ENCODE measurements at regions of chr3 and their contacts with region 1.

Region 1: DNA sequence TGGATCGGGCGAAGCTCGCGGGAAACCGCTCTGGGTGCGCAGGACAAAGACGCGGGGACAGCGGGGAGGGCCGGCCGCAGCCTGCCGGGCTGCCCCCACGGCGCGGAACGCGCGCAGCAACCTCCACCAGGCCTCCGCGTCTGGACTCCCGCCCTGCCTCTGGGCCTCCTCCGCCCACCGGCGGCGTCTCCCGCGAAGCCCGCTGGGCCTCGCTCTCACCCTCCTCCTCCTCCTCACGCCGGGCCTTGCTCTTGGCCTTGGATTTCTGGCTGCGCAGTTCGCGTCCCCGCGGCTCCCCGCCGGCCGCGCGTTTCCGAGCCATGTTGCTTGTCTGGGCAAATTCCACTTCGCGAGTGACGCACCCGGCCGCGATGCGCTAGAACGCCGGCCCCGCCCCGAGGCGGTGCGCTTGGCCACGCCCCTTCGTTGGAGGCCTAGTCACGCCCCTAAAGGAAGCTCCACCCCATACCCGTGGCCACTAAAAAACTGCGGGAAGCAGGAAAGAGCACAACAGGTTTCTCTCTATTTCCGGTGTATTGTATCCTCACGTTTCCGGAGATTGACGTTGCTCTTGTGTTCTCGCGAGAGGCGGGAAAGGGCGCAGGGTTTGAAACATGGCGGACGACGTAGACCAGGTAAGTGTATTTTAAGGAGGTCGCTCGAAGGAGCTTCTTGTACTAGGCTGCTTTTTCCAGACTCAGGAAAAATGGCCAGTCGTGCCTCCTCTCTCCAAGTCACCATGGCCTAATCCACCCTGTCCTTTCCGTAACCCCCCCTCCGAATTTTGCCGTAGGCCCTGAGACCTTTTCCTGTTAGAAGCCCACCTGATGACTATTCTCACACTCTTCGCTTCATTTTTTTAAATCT is at the starts of genes LSM3 and XPC:
- DNase-seq: peak; percentile 99
- ATAC-seq: peak; percentile 88
- H3K4me3 Mint-ChIP-seq: peak within 1 kb of the TSS; percentile 94
- H3K27ac Mint-ChIP-seq: peak within 1 kb of the TSS; percentile 100
- H3K4me1 Mint-ChIP-seq: peaks cover 59% of the 10 kb centered on the region
- H3K27me3 Mint-ChIP-seq: no peaks in the 10 kb centered on the region
- total RNA-seq, gene LSM3: 14.3 to 14.4 TPM
- total RNA-seq, gene XPC: 53.3 to 56.8 TPM

Region 2: GRCh38 chr3:14124615-14125190 is 53.8 kb before region 1 on chr3 and contains the starts of genes CHCHD4 and TMEM43:
- POLR2A ChIA-PET with region 1: interaction called, 48 read pairs
- DNase-seq: peak; percentile 96
- ATAC-seq: peak; percentile 92
- H3K4me3 Mint-ChIP-seq: peak within 1 kb of the TSS; percentile 95
- H3K27ac Mint-ChIP-seq: peak within 1 kb of the TSS; percentile 92
- H3K4me1 Mint-ChIP-seq: peaks cover 52% of the 10 kb centered on the region
- H3K27me3 Mint-ChIP-seq: no peaks in the 10 kb centered on the region
- total RNA-seq, gene CHCHD4: 10.1 to 11.9 TPM
- total RNA-seq, gene TMEM43: 44.4 to 47.0 TPM

Region 3: GRCh38 chr3:14144423-14145075 is 33.9 kb before region 1 on chr3:
- POLR2A ChIA-PET with region 1: interaction called, 31 read pairs
- DNase-seq: peak; percentile 46
- ATAC-seq: peak; percentile 89
- H3K4me3 Mint-ChIP-seq: peak overlapping the region; percentile 61
- H3K27ac Mint-ChIP-seq: peak overlapping the region; percentile 77
- H3K4me1 Mint-ChIP-seq: peaks cover 17% of the 10 kb centered on the region
- H3K27me3 Mint-ChIP-seq: no peaks in the 10 kb centered on the region

Region 4: DNA sequence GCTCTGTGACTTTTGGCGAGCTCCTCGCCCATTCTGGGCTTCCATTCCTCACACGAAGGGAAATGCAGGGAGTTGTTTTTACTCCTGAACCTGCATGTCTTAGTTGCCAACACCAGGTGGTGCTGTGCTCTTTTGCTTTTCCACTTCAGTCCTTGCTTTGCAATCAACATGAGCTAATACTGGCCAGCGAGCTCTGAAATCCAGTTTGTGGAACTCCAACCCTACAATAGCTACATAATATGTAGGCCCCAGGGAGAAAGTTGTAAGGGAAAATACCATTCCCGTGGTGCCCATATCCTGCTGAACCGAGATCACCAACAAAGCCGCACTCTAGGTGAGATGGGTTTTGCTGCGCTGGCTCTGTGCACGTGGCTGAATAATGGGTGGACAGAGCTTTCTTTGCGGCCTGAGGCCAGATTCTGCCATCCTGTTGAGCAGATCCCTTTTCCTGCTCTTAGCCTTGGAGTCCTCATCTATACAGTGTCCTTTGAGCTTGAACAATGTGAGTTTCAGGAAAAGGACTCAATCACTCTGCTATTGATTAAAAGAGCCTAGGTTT is 25.1 kb after region 1 on chr3:
- POLR2A ChIA-PET with region 1: no interaction called
- DNase-seq: no peak
- ATAC-seq: peak; percentile 45
- H3K4me3 Mint-ChIP-seq: no peak overlapping the region
- H3K27ac Mint-ChIP-seq: peak overlapping the region; percentile 32
- H3K4me1 Mint-ChIP-seq: peaks cover 4% of the 10 kb centered on the region
- H3K27me3 Mint-ChIP-seq: no peaks in the 10 kb centered on the region

Region 5: DNA sequence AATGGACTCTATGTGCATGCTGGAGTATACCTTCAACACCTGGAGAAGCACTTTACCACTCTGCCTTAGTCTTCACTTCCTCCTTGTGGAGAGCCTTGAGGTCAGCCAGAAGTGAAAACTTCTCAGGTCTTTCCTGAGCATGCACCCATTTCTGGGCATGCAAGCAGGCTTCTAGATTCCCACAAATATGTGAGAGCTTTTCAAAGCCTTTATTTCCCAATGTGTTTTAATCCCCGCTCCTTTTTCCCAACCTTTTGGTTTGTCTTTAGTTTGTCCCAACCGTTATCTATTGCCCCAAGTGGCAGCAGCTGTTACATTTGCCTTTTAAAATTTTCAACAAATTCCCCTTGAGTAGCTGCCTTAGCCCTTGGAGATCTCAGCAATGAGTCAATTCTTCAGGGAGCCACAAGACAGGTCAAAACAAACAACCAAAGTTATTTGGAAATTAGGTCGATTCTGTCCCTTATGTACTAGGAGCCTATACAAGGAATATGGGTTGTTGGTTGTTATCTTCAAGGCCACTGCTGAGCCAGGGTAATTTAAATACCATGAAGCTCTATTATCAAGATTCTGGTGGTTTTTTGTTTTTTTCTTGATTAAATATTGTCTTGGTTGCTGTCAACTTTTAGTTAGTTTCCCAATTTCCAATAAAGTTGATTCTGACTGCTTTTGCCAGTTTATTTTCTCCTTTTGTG is 44.6 kb after region 1 on chr3:
- POLR2A ChIA-PET with region 1: no interaction called
- DNase-seq: no peak
- ATAC-seq: no peak
- H3K4me3 Mint-ChIP-seq: no peak overlapping the region
- H3K27ac Mint-ChIP-seq: no peak overlapping the region
- H3K4me1 Mint-ChIP-seq: peaks cover 5% of the 10 kb centered on the region
- H3K27me3 Mint-ChIP-seq: peaks cover 27% of the 10 kb centered on the region

Region 6: DNA sequence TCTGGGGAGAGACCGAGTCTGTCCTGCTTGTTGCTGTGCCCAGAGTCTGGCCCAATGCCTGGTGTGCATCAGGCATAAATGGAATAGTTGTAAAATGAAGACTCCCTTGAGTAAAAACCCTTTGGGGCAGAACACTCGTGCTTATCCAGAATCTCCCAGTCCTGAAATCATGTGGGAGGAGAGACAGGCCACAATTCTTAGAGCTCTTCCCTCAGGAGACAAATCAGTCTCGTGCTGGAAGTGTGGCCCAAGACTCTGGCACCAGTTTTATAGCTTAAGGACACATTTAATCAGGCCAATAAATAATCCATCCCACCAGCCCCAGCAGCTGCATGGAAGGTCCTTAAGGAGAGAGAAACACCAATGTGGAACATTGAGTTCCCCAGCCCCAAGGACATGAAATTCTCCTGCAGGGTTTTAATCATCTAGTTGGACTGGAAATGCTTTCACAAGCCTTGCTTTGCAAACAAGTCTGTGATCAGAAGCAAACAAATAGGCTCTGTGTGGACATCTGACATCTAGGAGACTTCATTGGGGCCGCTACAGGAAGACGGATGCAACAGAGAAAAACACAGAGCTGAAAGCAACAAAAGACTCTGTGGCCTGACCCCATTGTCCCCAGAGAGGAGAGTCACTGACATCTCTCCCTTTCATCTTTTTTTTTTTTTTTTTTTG is 70.5 kb after region 1 on chr3:
- POLR2A ChIA-PET with region 1: no interaction called
- DNase-seq: no peak
- ATAC-seq: no peak
- H3K4me3 Mint-ChIP-seq: no peak overlapping the region
- H3K27ac Mint-ChIP-seq: no peak overlapping the region
- H3K4me1 Mint-ChIP-seq: no peaks in the 10 kb centered on the region
- H3K27me3 Mint-ChIP-seq: peaks cover 4% of the 10 kb centered on the region

Region 7: GRCh38 chr3:14651440-14652251 is 473.2 kb after region 1 on chr3 and contains the start of gene CCDC174:
- POLR2A ChIA-PET with region 1: interaction called, 17 read pairs
- DNase-seq: peak; percentile 88
- ATAC-seq: peak; percentile 98
- H3K4me3 Mint-ChIP-seq: peak within 1 kb of the TSS; percentile 97
- H3K27ac Mint-ChIP-seq: peak within 1 kb of the TSS; percentile 99
- H3K4me1 Mint-ChIP-seq: peaks cover 28% of the 10 kb centered on the region
- H3K27me3 Mint-ChIP-seq: no peaks in the 10 kb centered on the region
- total RNA-seq, gene CCDC174: 28.3 to 28.8 TPM

Measured in activated naive CD8-positive, alpha-beta T cell treated with anti-CD3 and anti-CD28 coated beads, Interleukin-2, amount 10 ng/mL, durations not matched to agents 7 days and 5 days (primary cell).